Ascending aorta (tissue), 2 donors: ENCODE measurements at regions of chr2 and their contacts with region 1.

Region 1: DNA sequence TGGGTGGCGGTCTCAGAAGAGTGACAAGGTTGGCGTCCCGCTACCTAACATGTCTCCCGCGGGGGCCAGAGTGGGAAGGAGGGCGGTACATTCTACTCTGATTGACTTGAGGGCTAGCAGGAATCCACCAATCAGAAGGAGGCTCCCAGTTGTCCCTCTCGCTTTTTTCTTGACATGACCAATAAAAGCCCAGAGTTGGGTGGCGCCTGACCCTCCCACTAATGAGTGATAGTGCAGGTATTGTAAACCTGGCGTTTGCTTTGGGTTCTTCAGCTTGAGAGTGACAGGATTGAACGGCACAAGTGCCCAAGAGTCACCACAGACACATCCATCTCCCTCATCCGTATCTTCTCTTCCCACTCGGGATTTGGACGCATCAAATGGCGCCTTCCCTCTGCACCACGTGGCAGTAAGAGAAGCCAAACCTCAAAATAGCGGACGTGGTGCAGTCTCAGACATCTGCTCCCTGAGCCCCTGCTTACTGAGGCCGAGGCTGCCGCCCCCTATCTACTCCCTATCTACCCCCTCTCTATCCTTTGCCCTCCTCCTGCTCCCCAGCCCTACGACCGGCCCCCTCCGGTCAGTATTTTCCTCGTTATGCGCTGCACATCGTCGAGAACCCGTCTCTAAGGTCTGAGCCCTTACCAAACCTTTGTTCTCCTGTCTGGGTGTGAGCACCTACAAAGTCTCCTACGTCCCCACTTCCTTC is 768 bp upstream of the FAM161A start:
- DNase-seq: peak; percentile 76 to 94
- H3K4me3 ChIP-seq: peak overlapping the region; percentile 76 to 94
- H3K27ac ChIP-seq: peak overlapping the region; percentile 93 to 95
- H3K4me1 ChIP-seq: peaks cover 0 to 4% of the 10 kb centered on the region in 2 donors
- H3K27me3 ChIP-seq: no peaks in the 10 kb centered on the region
- CTCF ChIP-seq: no peak

Region 2: DNA sequence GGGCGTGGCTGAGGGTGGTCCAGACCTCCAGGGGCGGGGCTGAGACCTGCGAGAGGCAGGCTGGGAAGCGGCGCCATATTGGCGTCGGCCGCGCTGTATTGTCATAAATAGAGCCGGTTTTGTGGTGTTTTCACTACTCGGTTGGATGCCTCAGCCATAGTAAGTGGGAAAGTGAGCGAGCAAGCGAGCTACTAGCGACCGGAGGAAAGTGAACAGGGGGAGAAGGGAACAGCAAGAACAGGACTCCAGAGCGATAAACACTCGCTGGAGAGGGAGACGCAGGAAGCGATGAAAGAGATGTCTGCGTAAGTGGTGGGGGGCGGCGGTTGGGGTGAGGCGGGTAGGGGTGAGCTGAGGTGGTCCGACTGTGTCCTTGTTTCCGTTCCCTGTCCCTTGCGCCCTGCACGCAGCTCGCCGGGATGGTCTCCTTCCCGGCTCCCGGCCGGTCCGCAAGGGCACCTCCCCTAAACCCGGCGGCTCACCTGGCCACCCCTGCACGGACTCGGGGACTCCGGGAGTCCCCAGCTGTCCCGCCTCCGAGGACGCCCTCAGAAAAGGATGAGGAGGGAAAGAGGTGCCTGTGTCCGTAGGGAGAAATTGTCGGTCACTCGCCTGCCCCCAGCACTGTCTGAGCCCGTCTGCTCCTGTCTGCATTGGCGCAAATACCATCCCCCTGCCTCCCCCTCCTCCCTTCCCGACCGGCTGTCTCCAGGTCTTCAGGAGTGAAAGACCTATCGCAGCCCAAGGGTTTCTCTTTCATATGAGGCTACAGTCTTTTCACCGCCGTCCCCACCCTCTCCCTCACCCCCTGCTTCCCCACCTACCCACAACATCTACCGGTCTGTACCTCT is 1098.2 kb before region 1 on chr2 and contains the start of gene PAPOLG:
- intact Hi-C with region 1: loop called (anchors 5 kb)
- DNase-seq: peak; percentile 89 to 98
- H3K4me3 ChIP-seq: peak within 1 kb of the TSS; percentile 71 to 73
- H3K27ac ChIP-seq: peak within 1 kb of the TSS; percentile 71 to 81
- H3K4me1 ChIP-seq: peaks cover 0 to 9% of the 10 kb centered on the region in 2 donors
- H3K27me3 ChIP-seq: no peaks in the 10 kb centered on the region
- CTCF ChIP-seq: no peak
- total RNA-seq, gene PAPOLG: 11.4 TPM

Region 3: GRCh38 chr2:61694312-61695274 is 160.0 kb before region 1 on chr2:
- intact Hi-C with region 1: loop called (anchors 2 kb)
- DNase-seq: peak; percentile 66 to 96
- H3K4me3 ChIP-seq: peak overlapping the region; percentile 63 to 71
- H3K27ac ChIP-seq: peak overlapping the region; percentile 61 to 67
- H3K4me1 ChIP-seq: no peaks in the 10 kb centered on the region
- H3K27me3 ChIP-seq: no peaks in the 10 kb centered on the region
- CTCF ChIP-seq: peak; percentile 23 to 62 (median 33)

Region 4: GRCh38 chr2:61888267-61889055 is 33.8 kb after region 1 on chr2 and contains the start of gene CCT4:
- intact Hi-C with region 1: loop called (anchors 1 kb)
- DNase-seq: peak; percentile 38 to 91
- H3K4me3 ChIP-seq: peak within 1 kb of the TSS; percentile 76 to 99
- H3K27ac ChIP-seq: peak within 1 kb of the TSS; percentile 92 to 97
- H3K4me1 ChIP-seq: peaks cover 3 to 6% of the 10 kb centered on the region in 2 donors
- H3K27me3 ChIP-seq: no peaks in the 10 kb centered on the region
- CTCF ChIP-seq: no peak
- total RNA-seq, gene CCT4: 35.3 TPM